ENCODE measurements at regions of chr1 and their contacts with region 1.

Region 1: DNA sequence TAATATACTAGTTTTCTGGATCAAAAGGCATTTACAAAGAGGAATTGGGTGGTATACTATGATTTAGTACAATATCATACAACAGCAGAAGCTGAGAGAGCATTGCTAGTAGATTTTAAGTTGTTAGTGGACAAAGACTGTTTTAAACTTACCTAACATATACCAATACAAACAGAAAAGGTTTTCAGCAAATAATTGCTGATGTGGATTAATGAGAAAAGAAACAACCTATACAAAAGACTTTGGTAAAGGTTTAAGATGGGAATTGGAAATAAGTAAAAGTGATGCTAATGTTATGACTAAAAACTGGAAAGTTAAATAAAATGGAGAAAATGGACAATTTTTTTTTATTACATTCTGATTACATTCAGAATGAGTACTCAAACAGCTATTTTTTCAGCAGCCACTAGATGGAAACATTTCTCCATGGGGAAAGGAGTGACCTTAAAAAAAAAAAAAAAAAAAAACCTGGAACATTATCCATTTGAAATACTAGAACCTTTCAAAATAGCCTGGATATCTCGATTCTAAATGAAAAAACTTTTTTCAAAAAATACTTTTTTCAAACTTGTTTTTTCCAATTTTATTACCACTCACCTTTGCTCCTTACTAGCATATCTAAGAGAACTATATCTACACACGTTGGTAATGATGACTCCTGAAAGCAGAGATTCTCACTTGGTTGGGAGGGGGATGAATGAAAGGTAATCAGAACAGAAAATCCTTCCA is 55.4 kb downstream of the EPRS1 start:
- DNase-seq: peak in 3 of 4 experiments; percentile 26 to 56 (median 28)
- ATAC-seq: peak; percentile 52
- H3K4me3 ChIP-seq: no peak overlapping the region
- H3K27ac ChIP-seq: no peak overlapping the region
- H3K4me1 ChIP-seq: no peaks in the 10 kb centered on the region; a peak in 1 of 5 replicates
- H3K27me3 ChIP-seq: no peaks in the 10 kb centered on the region
- CTCF ChIP-seq: peak in 2 of 3 experiments; percentile 28 to 76; a peak in 3 of 6 replicates
- EP300 ChIP-seq: no peak
- POLR2A ChIP-seq: no peak
- RAD21 ChIP-seq: peak; percentile 39 to 48; a peak in 3 of 4 replicates

Region 2: DNA sequence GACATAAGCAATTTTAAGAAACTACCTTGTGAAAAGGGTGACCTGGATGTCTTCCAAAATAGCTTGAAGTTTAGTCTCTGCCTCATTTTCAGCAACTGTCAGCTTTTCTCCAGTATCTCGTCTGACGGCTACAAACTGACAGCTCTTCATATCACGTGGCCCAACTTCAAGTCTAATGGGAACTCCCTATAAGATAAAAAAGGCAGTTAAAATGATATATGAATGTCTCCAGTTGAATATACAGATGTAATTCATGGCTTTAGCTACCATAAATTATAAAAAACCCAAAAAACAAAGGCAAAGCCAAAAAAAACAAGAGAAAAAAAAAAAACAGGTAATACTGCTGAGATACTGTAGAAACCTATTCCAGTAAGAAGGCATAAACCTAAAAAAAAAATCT is 17.7 kb before region 1 on chr1:
- CTCF ChIA-PET with region 1: no interaction called
- POLR2A ChIA-PET with region 1: interaction called, 14 read pairs
- in situ Hi-C with region 1: no loop called
- intact Hi-C with region 1: no loop called
- DNase-seq: peak in 1 of 4 experiments; percentile 69
- ATAC-seq: peak; percentile 57
- H3K4me3 ChIP-seq: no peak overlapping the region
- H3K27ac ChIP-seq: peak overlapping the region; percentile 27; the same call in 1 of the 3 replicates
- H3K4me1 ChIP-seq: peaks cover 4 to 5% of the 10 kb centered on the region in 2 experiments; a peak in 4 of 5 replicates
- H3K27me3 ChIP-seq: no peaks in the 10 kb centered on the region
- CTCF ChIP-seq: no peak
- EP300 ChIP-seq: no peak
- POLR2A ChIP-seq: no peak
- RAD21 ChIP-seq: no peak